Heart right ventricle (tissue), 16 donors: ENCODE measurements at regions of chr3 and their contacts with region 1.

Region 1: GRCh38 chr3:39208463-39209055 is 16.2 kb upstream of the XIRP1 start:
- DNase-seq: peak; percentile 44 to 77
- ATAC-seq: peak in 7 of 8 donors; percentile 73 to 93 (median 90)
- H3K4me3 ChIP-seq: no peak overlapping the region
- H3K27ac ChIP-seq: peak overlapping the region in 7 of 10 donors; percentile 1 to 50 (median 34)
- H3K4me1 ChIP-seq: peaks cover 0 to 20% (median 9%) of the 10 kb centered on the region in 9 donors
- H3K27me3 ChIP-seq: no peaks in the 10 kb centered on the region
- CTCF ChIP-seq: peak; percentile 38 to 83 (median 67)

Region 2: GRCh38 chr3:38805765-38806386 is 402.7 kb before region 1 on chr3:
- intact Hi-C with region 1: no loop called
- DNase-seq: peak in 1 of 2 donors; percentile 55
- ATAC-seq: peak in 2 of 8 donors; percentile 16 to 58
- H3K4me3 ChIP-seq: no peak overlapping the region
- H3K27ac ChIP-seq: no peak overlapping the region
- H3K4me1 ChIP-seq: peaks cover 0 to 1% (median 0%) of the 10 kb centered on the region in 9 donors
- H3K27me3 ChIP-seq: peaks cover 0 to 4% (median 0%) of the 10 kb centered on the region in 7 donors
- CTCF ChIP-seq: no peak

Region 3: DNA sequence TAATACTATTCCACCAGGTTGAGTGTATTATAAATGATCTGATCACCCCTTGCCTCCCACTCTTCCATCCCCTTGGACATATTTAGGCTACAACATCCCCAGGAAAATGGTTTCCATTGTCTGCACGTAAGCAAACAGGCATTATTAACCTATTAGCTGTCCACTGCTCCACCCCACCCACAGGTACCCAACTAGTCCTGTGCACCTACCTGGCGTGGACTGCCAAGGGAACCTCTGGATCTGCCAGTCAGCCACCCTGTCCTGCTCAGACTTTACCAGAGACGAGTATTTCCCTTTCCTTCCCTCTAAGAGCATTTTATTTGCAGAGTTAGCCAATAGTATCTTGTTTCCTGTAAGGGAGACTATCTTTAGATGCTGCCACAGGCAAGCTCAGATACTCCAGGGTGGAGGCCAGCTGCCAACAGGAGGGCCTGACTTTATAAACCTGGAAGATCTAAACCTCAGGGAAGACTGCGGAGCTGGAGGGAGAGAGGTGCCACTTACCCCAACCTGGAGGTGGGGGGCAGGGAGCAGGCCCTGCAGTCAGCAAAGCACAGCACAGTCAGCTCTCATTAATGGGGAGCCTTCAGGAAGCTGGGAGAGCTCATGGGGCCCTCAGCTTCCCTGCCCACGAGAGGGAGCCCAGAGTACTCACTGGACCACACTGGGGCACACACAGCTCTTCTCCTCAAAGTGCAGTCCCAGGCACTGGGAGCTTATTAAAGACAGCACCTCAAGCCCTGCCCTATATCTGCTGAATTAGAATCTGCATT is 71.4 kb after region 1 on chr3 and contains the start of gene CX3CR1:
- intact Hi-C with region 1: loop called in 5 of 10 experiments (anchors 5 kb)
- DNase-seq: no peak
- ATAC-seq: peak in 7 of 8 donors; percentile 19 to 83 (median 62)
- H3K4me3 ChIP-seq: peak within 1 kb of the TSS in 4 of 10 donors; percentile 2 to 25 (median 12)
- H3K27ac ChIP-seq: peak within 1 kb of the TSS in 3 of 10 donors; percentile 15 to 68 (median 26)
- H3K4me1 ChIP-seq: peaks cover 0 to 55% (median 4%) of the 10 kb centered on the region in 9 donors
- H3K27me3 ChIP-seq: no peaks in the 10 kb centered on the region
- CTCF ChIP-seq: peak in 1 of 9 donors; percentile 8
- total RNA-seq, gene CX3CR1: 0.12 to 6.9 (median 1.3) TPM